ENCODE measurements at regions of chr17 and their contacts with region 1.

Region 1: DNA sequence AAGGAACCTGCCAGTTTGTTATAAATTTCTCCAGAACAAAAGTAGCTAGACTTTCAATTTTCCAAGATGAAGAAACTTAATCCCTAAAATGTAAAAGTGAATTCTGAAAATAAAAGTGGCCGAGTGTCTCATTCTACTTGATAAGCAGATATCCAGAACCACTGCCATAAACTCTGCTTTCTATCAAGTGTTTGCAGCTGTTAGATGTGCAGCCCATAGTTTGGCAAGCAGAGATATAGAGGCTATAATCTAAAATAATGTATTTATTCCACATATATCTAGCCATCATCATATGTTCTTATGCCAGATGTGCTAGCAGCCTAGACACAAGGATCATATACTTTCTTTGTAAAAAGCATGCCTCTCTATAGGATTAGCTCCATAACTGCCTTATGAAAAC is 14.7 kb upstream of the FBXL20 start:
- DNase-seq: no peak
- H3K4me3 Mint-ChIP-seq: no peak overlapping the region
- H3K27ac Mint-ChIP-seq: no peak overlapping the region
- H3K4me1 Mint-ChIP-seq: no peaks in the 10 kb centered on the region
- H3K27me3 Mint-ChIP-seq: no peaks in the 10 kb centered on the region
- CTCF ChIP-seq: no peak

Region 2: GRCh38 chr17:39132192-39132610 is 283.9 kb before region 1 on chr17:
- CTCF ChIA-PET with region 1: interaction called, 10 read pairs
- intact Hi-C with region 1: no loop called
- DNase-seq: no peak
- H3K4me3 Mint-ChIP-seq: no peak overlapping the region
- H3K27ac Mint-ChIP-seq: no peak overlapping the region
- H3K4me1 Mint-ChIP-seq: no peaks in the 10 kb centered on the region
- H3K27me3 Mint-ChIP-seq: peaks cover 75% of the 10 kb centered on the region
- CTCF ChIP-seq: no peak

Region 3: GRCh38 chr17:39325528-39326240 is 90.5 kb before region 1 on chr17:
- CTCF ChIA-PET with region 1: no interaction called
- intact Hi-C with region 1: no loop called
- DNase-seq: no peak
- H3K4me3 Mint-ChIP-seq: no peak overlapping the region
- H3K27ac Mint-ChIP-seq: no peak overlapping the region
- H3K4me1 Mint-ChIP-seq: no peaks in the 10 kb centered on the region
- H3K27me3 Mint-ChIP-seq: no peaks in the 10 kb centered on the region
- CTCF ChIP-seq: no peak

Region 4: GRCh38 chr17:39429600-39429999 is 13.5 kb after region 1 on chr17:
- CTCF ChIA-PET with region 1: interaction called, 4 read pairs
- intact Hi-C with region 1: loop called (anchors 2 kb)
- DNase-seq: no peak
- H3K4me3 Mint-ChIP-seq: no peak overlapping the region
- H3K27ac Mint-ChIP-seq: no peak overlapping the region
- H3K4me1 Mint-ChIP-seq: no peaks in the 10 kb centered on the region
- H3K27me3 Mint-ChIP-seq: no peaks in the 10 kb centered on the region
- CTCF ChIP-seq: no peak